ENCODE measurements at regions of chr1 and their contacts with region 1.

Region 1: GRCh38 chr1:178542560-178543356 is 29.8 kb downstream of the TEX35 start:
- DNase-seq: peak; percentile 39
- H3K4me3 ChIP-seq: peak overlapping the region; percentile 74 to 91 (median 84)
- H3K27ac ChIP-seq: peak overlapping the region; percentile 85 to 89 (median 88)
- H3K4me1 ChIP-seq: peaks cover 20 to 70% (median 31%) of the 10 kb centered on the region in 3 donors
- H3K27me3 ChIP-seq: no peaks in the 10 kb centered on the region
- CTCF ChIP-seq: peak; percentile 96 to 99 (median 98)
- POLR2A ChIP-seq: no peak

Region 2: DNA sequence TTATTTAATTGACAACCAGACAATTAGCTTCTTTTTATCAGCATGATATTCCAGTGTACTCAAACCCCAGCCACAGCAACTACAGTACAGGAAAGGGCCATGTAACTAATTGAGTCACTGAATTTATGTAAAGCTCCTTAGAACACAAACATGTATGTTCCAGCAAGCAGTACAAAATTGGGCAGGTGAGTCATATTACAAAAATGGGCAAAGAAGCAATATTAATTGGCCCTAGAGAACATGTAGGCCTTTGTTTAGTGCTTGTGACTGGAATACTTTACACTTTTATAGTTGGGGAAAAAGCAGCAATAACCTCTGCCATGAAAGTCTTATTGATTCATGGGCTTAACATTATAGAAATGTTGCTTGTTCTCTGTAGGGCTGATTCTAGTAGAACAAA is 77.7 kb before region 1 on chr1:
- intact Hi-C with region 1: no loop called
- DNase-seq: no peak
- H3K4me3 ChIP-seq: no peak overlapping the region
- H3K27ac ChIP-seq: peak overlapping the region in 1 of 4 donors; percentile 4
- H3K4me1 ChIP-seq: peaks cover 0 to 7% (median 0%) of the 10 kb centered on the region in 3 donors
- H3K27me3 ChIP-seq: no peaks in the 10 kb centered on the region
- CTCF ChIP-seq: no peak
- POLR2A ChIP-seq: no peak

Region 3: GRCh38 chr1:178486100-178487069 is 56.4 kb before region 1 on chr1:
- intact Hi-C with region 1: no loop called
- DNase-seq: no peak
- H3K4me3 ChIP-seq: peak overlapping the region in 3 of 4 donors; percentile 13 to 45 (median 36)
- H3K27ac ChIP-seq: no peak overlapping the region
- H3K4me1 ChIP-seq: peaks cover 0 to 13% (median 10%) of the 10 kb centered on the region in 3 donors
- H3K27me3 ChIP-seq: peaks cover 0 to 12% (median 0%) of the 10 kb centered on the region in 4 donors
- CTCF ChIP-seq: no peak
- POLR2A ChIP-seq: no peak

Region 4: DNA sequence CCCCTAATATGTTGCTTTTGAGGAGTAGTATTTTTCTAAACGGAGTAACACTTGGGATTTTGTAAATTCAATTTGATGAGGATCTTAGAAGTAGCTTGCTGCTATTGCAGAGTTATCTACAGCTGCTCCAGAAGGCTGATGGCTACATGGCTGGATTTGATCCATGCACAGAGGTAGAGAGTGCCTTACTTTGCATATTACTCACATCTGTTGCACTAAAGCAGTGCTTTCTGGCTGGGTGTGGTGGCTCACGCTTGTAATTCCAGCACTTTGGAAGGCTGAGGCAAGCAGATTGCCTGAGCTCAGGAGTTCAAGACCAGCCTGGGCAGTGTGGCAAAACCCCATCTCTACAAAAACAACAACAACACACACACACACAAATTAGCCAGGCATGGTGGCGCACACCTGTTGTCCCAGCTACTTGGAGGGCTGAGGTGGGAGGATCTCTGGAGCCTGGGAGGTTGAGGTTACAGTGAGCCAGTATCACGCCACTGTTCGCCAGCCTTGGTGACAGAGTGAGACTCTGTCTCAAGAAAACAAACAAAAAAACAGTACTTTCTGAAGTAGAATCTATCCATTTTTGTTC is 206.9 kb after region 1 on chr1:
- intact Hi-C with region 1: loop called (anchors 5 kb)
- DNase-seq: no peak
- H3K4me3 ChIP-seq: no peak overlapping the region
- H3K27ac ChIP-seq: no peak overlapping the region
- H3K4me1 ChIP-seq: no peaks in the 10 kb centered on the region
- H3K27me3 ChIP-seq: no peaks in the 10 kb centered on the region
- CTCF ChIP-seq: no peak
- POLR2A ChIP-seq: no peak

Measured in esophagus squamous epithelium (tissue), 5 donors.